ENCODE measurements at regions of chr10 and their contacts with region 1.

Region 1: DNA sequence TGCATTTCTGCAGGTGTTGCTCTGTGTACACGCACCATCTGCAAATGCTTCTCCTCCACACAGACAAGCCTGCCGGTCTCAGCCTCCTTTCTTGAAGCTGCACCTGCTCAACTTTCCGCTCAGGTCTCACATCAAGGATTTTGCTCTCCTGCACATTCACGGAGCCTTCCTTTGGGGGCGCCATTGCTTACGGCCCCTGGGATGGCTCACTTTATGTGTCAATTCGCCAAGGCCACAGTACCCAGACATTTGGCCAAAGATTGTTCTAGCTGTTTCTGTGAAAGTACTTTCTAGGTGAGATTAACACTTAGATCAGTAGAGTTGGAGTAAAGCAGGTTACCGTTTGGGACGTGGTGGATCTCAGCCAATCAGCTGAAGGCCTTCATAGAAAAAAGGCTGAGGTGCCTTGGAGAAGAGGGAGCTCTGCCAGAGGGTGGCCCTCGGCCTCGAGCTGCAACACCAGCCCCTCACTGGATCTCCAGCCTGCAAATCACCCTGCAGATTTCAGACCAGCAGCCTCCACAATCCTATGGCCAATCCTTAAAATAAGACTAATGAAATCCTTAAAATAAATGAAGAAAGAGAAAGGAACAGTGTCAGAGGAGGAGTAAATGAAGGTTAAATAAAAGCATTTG is 39.9 kb upstream of the PPP2R2D start:
- DNase-seq: peak in 1 of 2 experiments; percentile 54
- H3K4me3 ChIP-seq: no peak overlapping the region
- H3K27ac ChIP-seq: no peak overlapping the region
- H3K4me1 ChIP-seq: no peaks in the 10 kb centered on the region
- H3K27me3 ChIP-seq: no peaks in the 10 kb centered on the region
- CTCF ChIP-seq: peak; percentile 58 to 80 (median 77)
- EP300 ChIP-seq: no peak
- POLR2A ChIP-seq: no peak
- RAD21 ChIP-seq: peak; percentile 25 to 51; a peak in 3 of 4 replicates

Region 2: GRCh38 chr10:131655101-131655849 is 205.6 kb before region 1 on chr10:
- CTCF ChIA-PET with region 1: no interaction called
- POLR2A ChIA-PET with region 1: no interaction called
- DNase-seq: peak in 1 of 2 experiments; percentile 48
- H3K4me3 ChIP-seq: no peak overlapping the region
- H3K27ac ChIP-seq: no peak overlapping the region
- H3K4me1 ChIP-seq: peaks cover 6 to 28% (median 18%) of the 10 kb centered on the region in 4 experiments
- H3K27me3 ChIP-seq: no peaks in the 10 kb centered on the region; a peak in 2 of 7 replicates
- CTCF ChIP-seq: no peak
- EP300 ChIP-seq: no peak
- POLR2A ChIP-seq: no peak
- RAD21 ChIP-seq: no peak

Region 3: GRCh38 chr10:131676511-131677421 is 184.2 kb before region 1 on chr10:
- CTCF ChIA-PET with region 1: no interaction called
- POLR2A ChIA-PET with region 1: no interaction called
- DNase-seq: peak; percentile 70 to 78
- H3K4me3 ChIP-seq: peak overlapping the region in 1 of 4 experiments; percentile 47; a peak in 3 of 8 replicates
- H3K27ac ChIP-seq: no peak overlapping the region
- H3K4me1 ChIP-seq: peaks cover 0 to 25% (median 13%) of the 10 kb centered on the region in 4 experiments; a peak in 5 of 7 replicates
- H3K27me3 ChIP-seq: peaks cover 0 to 2% (median 0%) of the 10 kb centered on the region in 4 experiments; a peak in 3 of 7 replicates
- CTCF ChIP-seq: no peak
- EP300 ChIP-seq: 0 out of 3 replicates have a peak, but pooled peaks of 1 of the 2 experiments have one; percentile 45
- POLR2A ChIP-seq: no peak
- RAD21 ChIP-seq: no peak

Region 4: GRCh38 chr10:131841131-131841660 is 19.7 kb before region 1 on chr10:
- CTCF ChIA-PET with region 1: interaction called, 10 read pairs
- POLR2A ChIA-PET with region 1: no interaction called
- DNase-seq: no peak
- H3K4me3 ChIP-seq: no peak overlapping the region
- H3K27ac ChIP-seq: no peak overlapping the region
- H3K4me1 ChIP-seq: no peaks in the 10 kb centered on the region; a peak in 1 of 7 replicates
- H3K27me3 ChIP-seq: no peaks in the 10 kb centered on the region
- CTCF ChIP-seq: no peak
- EP300 ChIP-seq: no peak
- POLR2A ChIP-seq: no peak
- RAD21 ChIP-seq: no peak

Measured in H1 (cell line).